ENCODE measurements at regions of chr15 and their contacts with region 1.

Region 1: DNA sequence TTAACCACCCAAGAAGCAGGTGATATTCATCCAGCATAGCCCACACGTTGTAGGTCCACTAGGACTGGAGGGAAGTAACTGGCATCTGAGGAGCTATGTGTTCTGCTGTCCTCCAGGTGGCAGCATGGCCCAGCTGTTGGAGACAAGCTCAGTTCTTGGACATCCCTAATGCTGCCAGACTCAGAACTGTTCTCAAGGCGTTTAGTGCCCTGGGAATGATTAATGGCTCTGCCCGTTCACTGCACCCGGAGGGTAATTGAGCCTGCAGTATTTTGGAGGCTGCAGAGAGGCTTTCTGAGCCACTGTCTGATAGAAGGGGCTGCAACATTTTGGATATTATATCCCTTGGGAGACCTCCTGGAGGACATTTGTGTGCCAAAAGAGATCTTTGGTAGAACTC is 521.2 kb upstream of the SEMA6D start:
- DNase-seq: peak; percentile 13
- ATAC-seq: peak; percentile 97
- H3K4me3 ChIP-seq: no peak overlapping the region
- H3K27ac ChIP-seq: no peak overlapping the region
- H3K4me1 ChIP-seq: no peaks in the 10 kb centered on the region
- H3K27me3 ChIP-seq: no peaks in the 10 kb centered on the region
- CTCF ChIP-seq: peak; percentile 62 to 87 (median 79)
- EP300 ChIP-seq: no peak
- POLR2A ChIP-seq: no peak
- RAD21 ChIP-seq: peak; percentile 87

Region 2: DNA sequence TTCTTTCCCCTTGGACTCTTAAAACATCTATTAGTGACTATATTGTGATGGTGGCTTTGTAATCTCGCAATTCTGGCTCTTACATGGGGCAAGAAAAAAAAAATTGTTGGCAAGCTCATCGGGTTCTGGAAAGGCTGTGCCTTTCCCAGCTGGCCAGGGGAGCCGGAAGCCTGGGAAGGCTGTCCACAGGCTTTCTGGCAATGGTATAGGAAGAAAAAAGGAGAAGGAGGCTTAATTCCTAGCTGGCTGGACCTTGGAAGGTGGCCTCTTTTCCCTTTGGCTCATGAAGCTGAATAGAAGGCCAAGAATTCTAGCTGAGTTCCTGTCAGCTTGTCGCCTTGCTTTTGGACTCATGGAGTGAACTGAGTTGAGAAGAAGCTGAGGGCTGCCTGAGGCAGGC is 277.8 kb after region 1 on chr15:
- CTCF ChIA-PET with region 1: no interaction called
- POLR2A ChIA-PET with region 1: no interaction called
- RAD21 ChIA-PET with region 1: no interaction called
- SMC1A ChIA-PET with region 1: no interaction called
- in situ Hi-C with region 1: no loop called
- intact Hi-C with region 1: loop called (anchors 5 kb)
- DNase-seq: no peak
- ATAC-seq: no peak
- H3K4me3 ChIP-seq: no peak overlapping the region
- H3K27ac ChIP-seq: no peak overlapping the region
- H3K4me1 ChIP-seq: no peaks in the 10 kb centered on the region
- H3K27me3 ChIP-seq: no peaks in the 10 kb centered on the region
- CTCF ChIP-seq: no peak
- EP300 ChIP-seq: no peak
- POLR2A ChIP-seq: no peak
- RAD21 ChIP-seq: no peak

Region 3: GRCh38 chr15:47673232-47674080 is 477.4 kb after region 1 on chr15:
- CTCF ChIA-PET with region 1: no interaction called
- POLR2A ChIA-PET with region 1: no interaction called
- RAD21 ChIA-PET with region 1: no interaction called
- SMC1A ChIA-PET with region 1: no interaction called
- in situ Hi-C with region 1: no loop called
- intact Hi-C with region 1: no loop called
- DNase-seq: no peak
- ATAC-seq: no peak
- H3K4me3 ChIP-seq: no peak overlapping the region
- H3K27ac ChIP-seq: no peak overlapping the region
- H3K4me1 ChIP-seq: no peaks in the 10 kb centered on the region
- H3K27me3 ChIP-seq: no peaks in the 10 kb centered on the region
- CTCF ChIP-seq: no peak
- EP300 ChIP-seq: no peak
- POLR2A ChIP-seq: no peak
- RAD21 ChIP-seq: no peak

Region 4: GRCh38 chr15:47711654-47712053 is 515.6 kb after region 1 on chr15:
- CTCF ChIA-PET with region 1: interaction called, 7 read pairs
- POLR2A ChIA-PET with region 1: no interaction called
- RAD21 ChIA-PET with region 1: no interaction called
- SMC1A ChIA-PET with region 1: interaction called, 6 read pairs
- in situ Hi-C with region 1: no loop called
- intact Hi-C with region 1: loop called (anchors 10 kb)
- DNase-seq: no peak
- ATAC-seq: no peak
- H3K4me3 ChIP-seq: no peak overlapping the region
- H3K27ac ChIP-seq: no peak overlapping the region
- H3K4me1 ChIP-seq: no peaks in the 10 kb centered on the region
- H3K27me3 ChIP-seq: peaks cover 0 to 1% of the 10 kb centered on the region in 2 experiments; a peak in 2 of 4 replicates
- CTCF ChIP-seq: peak; percentile 27 to 48 (median 42); a peak in 4 of 6 replicates
- EP300 ChIP-seq: no peak
- POLR2A ChIP-seq: no peak
- RAD21 ChIP-seq: peak; percentile 83

Region 5: DNA sequence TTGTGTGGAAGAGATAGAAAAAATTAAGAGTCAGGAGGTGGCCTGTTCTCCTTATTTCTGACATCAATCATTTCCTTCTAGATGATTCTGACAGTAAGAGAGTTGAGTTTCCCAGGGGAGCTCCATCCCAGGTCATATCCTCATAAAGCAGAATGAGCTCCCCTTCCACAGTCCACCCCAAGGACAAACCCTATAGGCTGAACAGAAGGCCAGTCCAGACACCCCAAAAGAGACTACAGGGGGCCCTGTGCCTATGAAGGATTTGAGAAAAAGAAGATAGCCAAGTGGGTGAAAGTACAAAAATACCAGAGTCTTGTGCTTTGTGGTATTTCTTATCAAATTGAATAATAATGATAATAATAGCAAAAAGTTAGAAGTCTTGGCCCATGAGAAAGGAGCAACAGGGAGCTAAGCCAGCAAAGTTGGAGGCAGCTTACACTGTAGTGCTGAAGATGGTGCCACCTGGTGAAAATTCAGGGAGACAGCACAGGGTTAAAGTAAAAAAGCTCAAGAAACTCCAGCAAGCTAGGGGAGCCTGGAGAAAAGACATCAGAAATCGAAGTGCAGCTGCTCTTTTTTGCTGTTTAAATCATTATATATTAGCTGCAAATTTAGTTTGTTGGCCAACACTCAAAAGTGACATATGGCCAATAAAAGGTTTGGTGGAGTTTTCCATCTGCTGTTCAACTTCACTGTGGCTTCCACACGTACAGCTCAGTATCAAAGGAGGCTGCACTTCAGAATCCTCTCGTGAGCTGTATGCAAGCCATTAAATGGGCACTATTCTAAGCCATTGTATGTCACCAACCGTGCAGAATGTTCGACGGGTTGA is 888.9 kb after region 1 on chr15:
- CTCF ChIA-PET with region 1: interaction called, 14 read pairs
- POLR2A ChIA-PET with region 1: no interaction called
- RAD21 ChIA-PET with region 1: interaction called, 13 read pairs
- SMC1A ChIA-PET with region 1: interaction called, 7 read pairs
- in situ Hi-C with region 1: loop called (anchors 10 kb)
- intact Hi-C with region 1: loop called (anchors 10 kb)
- DNase-seq: no peak
- ATAC-seq: peak; percentile 72
- H3K4me3 ChIP-seq: no peak overlapping the region
- H3K27ac ChIP-seq: no peak overlapping the region
- H3K4me1 ChIP-seq: no peaks in the 10 kb centered on the region
- H3K27me3 ChIP-seq: no peaks in the 10 kb centered on the region
- CTCF ChIP-seq: peak; percentile 44 to 52 (median 50)
- EP300 ChIP-seq: no peak
- POLR2A ChIP-seq: no peak
- RAD21 ChIP-seq: peak; percentile 59

Region 6: GRCh38 chr15:48250640-48251076 is 1054.6 kb after region 1 on chr15:
- CTCF ChIA-PET with region 1: interaction called, 4 read pairs
- POLR2A ChIA-PET with region 1: no interaction called
- RAD21 ChIA-PET with region 1: no interaction called
- SMC1A ChIA-PET with region 1: no interaction called
- in situ Hi-C with region 1: loop called (anchors 10 kb)
- intact Hi-C with region 1: loop called (anchors 2 kb)
- DNase-seq: peak; percentile 17
- ATAC-seq: peak; percentile 66
- H3K4me3 ChIP-seq: no peak overlapping the region
- H3K27ac ChIP-seq: no peak overlapping the region
- H3K4me1 ChIP-seq: no peaks in the 10 kb centered on the region
- H3K27me3 ChIP-seq: no peaks in the 10 kb centered on the region; a peak in 2 of 4 replicates
- CTCF ChIP-seq: peak; percentile 71 to 73 (median 73)
- EP300 ChIP-seq: no peak
- POLR2A ChIP-seq: no peak
- RAD21 ChIP-seq: peak; percentile 70

Region 7: GRCh38 chr15:48285329-48286214 is 1089.5 kb after region 1 on chr15:
- CTCF ChIA-PET with region 1: interaction called, 20 read pairs
- POLR2A ChIA-PET with region 1: no interaction called
- RAD21 ChIA-PET with region 1: interaction called, 4 read pairs
- SMC1A ChIA-PET with region 1: interaction called, 3 read pairs
- in situ Hi-C with region 1: loop called (anchors 10 kb)
- intact Hi-C with region 1: loop called (anchors 5 kb)
- DNase-seq: peak; percentile 38
- ATAC-seq: peak; percentile 92
- H3K4me3 ChIP-seq: no peak overlapping the region
- H3K27ac ChIP-seq: no peak overlapping the region
- H3K4me1 ChIP-seq: no peaks in the 10 kb centered on the region
- H3K27me3 ChIP-seq: no peaks in the 10 kb centered on the region
- CTCF ChIP-seq: peak; percentile 59 to 75 (median 73); a peak in 5 of 6 replicates
- EP300 ChIP-seq: no peak
- POLR2A ChIP-seq: no peak
- RAD21 ChIP-seq: peak; percentile 57